Dendritic cell treated with granulocyte-macrophage colony-stimulating factor and Interleukin-4, amounts not matched to agents 40 ng/mL and 50 ng/mL, for 4 days (primary cell): ENCODE measurements at regions of chr1 and their contacts with region 1.

Region 1: DNA sequence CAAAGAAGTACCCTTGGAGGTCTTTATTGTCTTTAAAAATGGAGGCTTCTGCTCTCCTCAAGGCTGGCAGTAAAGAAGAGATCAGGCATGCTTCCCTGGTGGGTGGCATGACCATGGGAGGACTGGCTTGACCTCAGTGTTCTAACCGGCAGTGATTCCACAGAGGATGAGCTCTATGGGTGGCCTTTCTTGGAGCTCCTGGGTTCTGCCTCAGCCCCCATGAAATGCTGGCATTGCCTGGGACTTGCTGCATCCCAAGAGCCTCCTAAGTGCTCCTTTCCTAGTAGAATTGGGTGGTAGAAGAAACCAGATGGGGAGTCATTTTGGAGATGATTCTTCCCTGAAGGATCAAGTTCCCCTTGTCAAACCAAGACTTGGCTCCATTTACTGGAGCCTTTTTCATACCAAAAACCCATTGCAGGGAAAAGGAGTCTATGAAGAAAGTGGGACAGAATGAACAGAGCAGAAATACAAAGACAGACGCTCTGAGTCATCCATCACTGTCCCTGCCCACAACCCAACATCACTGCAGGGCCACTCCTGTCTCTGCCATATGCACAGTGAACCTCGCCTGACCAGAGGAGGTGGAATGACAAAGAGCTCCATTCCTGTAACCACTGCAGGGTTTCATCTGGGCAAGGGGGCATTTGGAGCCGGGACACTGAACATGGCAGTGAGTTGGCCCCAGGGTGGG is 42.4 kb downstream of the RIMS3 start:
- H3K4me3 Mint-ChIP-seq: no peak overlapping the region
- H3K27ac Mint-ChIP-seq: no peak overlapping the region
- H3K4me1 Mint-ChIP-seq: peaks cover 6% of the 10 kb centered on the region
- H3K27me3 Mint-ChIP-seq: peaks cover 4% of the 10 kb centered on the region

Region 2: DNA sequence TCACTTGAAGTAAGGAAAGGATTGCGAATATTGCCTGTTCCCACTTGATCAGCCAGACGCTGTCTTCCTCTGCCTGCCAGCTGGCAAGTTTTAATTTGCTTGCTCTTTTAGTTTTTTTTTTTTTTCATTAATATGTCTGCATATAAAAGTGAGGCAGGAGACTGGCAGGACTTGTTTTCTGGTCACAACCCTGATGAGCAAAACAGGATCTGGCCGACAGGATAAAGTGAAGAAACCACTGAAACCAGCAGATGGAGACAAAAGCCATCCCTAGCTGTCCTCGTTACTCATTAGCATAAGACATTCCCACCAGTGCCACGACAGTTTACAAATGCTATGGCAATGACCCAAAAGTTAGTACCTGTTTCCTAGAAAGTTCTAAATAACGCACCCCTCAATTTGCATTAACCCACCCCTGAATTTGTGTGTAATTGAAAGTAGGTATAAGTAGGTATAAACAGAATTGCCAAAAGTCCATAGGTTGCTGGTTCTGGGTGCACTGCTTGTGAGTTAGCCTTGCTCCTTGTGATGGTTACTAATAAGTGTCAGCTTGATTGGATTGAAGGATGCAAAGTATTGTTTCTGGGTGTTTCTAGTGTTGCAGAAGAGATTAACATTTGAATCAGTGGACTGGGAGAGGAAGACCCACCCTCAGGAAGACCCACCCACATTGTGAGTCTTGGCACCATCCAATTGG is 30.8 kb before region 1 on chr1:
- intact Hi-C with region 1: no loop called
- H3K4me3 Mint-ChIP-seq: no peak overlapping the region
- H3K27ac Mint-ChIP-seq: no peak overlapping the region
- H3K4me1 Mint-ChIP-seq: peaks cover 28% of the 10 kb centered on the region
- H3K27me3 Mint-ChIP-seq: peaks cover 5% of the 10 kb centered on the region

Region 3: DNA sequence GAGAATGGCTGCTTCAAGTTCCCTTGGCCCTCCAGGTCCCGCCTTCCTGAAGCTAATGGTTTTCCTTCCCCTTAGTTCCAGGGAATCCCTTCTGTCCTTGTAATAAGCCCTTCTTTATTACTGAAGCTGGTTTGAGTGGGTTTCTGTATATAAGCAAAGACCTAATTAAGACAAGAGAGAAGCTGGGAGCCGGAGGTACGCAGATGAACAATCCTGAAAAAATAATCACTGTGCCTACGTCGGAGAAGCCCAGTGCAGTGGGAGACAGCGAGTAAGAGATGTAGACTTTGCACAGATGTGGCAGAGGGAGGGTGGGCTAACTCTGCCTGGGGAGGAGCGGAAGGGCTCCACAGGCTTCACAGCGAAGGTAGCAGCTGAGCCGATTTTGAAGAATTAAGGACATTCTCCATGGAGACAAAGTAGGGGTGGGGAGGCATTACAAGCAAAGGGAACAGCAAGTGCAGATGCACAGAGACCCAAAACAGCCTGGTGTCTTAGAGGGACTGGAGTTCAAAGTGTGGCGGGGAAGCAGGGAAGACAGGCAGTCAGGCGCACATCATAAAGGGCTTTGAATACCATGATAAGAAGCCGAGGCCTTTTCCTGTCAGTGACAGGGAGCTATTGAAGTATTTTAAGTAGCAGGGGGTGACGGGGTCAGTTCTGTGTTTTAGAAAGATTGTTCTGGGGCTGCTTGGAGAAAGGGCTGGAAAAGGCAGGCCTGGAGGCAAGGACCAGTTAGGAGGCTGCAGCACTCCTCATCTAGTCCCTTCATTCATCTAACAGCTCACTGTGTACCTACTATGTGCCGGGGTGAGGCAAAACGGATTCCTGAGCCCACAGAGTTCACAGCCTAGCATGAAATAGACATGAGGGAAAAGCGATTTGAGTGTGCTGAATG is 35.9 kb after region 1 on chr1:
- intact Hi-C with region 1: loop called (anchors 5 kb)
- H3K4me3 Mint-ChIP-seq: no peak overlapping the region
- H3K27ac Mint-ChIP-seq: no peak overlapping the region
- H3K4me1 Mint-ChIP-seq: peaks cover 27% of the 10 kb centered on the region
- H3K27me3 Mint-ChIP-seq: peaks cover 17% of the 10 kb centered on the region

Region 4: DNA sequence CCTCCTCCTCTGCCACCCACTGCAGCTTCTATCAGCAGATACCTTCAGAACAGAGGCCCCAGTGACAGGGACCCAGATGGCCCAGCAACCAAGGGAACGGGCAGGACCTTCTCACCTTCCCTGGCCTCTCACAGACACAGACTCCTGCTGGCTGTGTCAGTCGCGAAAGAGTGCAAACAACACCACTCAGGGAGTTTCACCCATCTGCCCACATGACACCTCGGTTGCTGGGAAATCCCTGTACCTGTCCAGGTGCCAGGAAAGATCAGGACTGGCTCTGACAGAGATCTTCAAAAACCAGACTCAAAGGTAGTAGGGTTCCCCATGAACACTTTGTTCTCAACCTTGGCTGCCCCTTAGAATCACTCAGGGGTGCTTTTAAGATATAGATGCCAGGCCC is 1379.1 kb after region 1 on chr1:
- intact Hi-C with region 1: no loop called
- H3K4me3 Mint-ChIP-seq: no peak overlapping the region
- H3K27ac Mint-ChIP-seq: no peak overlapping the region
- H3K4me1 Mint-ChIP-seq: no peaks in the 10 kb centered on the region
- H3K27me3 Mint-ChIP-seq: no peaks in the 10 kb centered on the region